Common myeloid progenitor, CD34-positive (primary cell): ENCODE measurements at regions of chr12 and their contacts with region 1.

Region 1: DNA sequence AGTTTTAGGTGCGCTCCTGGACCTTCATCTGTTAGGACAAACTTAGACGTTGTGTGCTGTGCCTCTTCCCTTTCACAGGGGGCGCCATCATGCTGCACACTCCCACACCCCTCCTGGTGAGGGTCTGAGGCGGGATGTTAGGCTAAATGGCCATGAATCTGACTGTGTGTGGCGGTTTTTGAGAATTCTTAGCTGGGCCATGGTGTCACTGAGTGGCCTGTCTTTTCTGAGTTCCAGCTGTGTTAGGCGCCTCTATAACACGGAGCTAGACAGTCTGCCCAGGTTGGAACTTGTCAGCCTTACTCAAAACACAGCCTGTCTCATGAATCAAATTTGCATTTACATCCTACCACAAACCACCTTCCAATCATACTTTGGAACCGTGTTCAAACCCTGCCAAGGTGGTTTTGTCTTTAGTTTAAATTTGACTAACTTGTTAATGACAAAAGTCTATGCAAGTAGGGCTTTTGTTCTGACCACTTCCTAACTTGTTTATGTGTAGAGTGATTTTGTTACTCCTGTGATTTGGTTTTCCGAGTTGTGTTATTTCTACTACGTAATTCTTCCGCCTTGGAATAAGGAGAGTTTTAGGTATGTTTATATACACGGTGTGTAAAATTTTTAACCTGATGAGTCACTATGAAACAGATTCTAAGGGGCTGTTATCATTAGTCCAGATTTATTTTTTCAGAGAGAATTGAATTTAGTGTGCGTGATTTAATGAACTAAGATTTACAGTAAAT is 19.6 kb downstream of the ACVR1B start:
- DNase-seq: peak in 2 of 3 donors; percentile 41 to 47
- H3K4me3 ChIP-seq: peak overlapping the region in 2 of 7 experiments; percentile 4 to 26
- H3K27ac ChIP-seq: no peak overlapping the region
- H3K4me1 ChIP-seq: peaks cover 49 to 62% (median 54%) of the 10 kb centered on the region in 4 experiments
- H3K27me3 ChIP-seq: no peaks in the 10 kb centered on the region

Region 2: DNA sequence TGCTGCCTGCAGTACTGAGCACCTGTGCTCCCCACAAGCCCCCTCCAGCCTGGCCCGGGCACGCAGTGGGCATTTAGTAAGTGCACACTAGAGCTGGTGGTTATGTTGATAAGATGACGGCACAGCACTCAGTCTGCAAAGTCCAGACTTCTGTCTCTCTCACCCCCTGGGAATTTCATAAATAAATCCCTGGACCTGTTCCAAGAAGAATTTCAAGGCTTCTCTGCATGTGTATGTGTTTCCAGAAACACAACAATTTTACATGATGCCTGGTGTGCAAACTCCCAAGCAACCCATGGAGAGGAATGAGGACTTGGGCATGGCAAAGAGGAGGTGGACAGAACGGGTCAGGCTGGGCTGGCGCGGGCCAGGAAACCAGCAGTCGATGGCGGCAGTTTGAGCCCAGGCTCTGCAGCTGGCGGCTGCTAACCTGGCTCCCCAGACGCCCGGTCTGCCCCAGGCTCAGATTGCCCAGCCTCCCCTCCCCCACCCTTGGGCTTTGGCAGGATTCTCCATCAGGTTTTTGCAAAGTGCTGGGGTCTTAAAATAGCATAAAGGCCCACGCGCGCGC is 30.0 kb before region 1 on chr12:
- CTCF ChIA-PET with region 1: no interaction called
- POLR2A ChIA-PET with region 1: no interaction called
- DNase-seq: no peak
- H3K4me3 ChIP-seq: no peak overlapping the region
- H3K27ac ChIP-seq: no peak overlapping the region
- H3K4me1 ChIP-seq: peaks cover 0 to 6% (median 2%) of the 10 kb centered on the region in 4 experiments
- H3K27me3 ChIP-seq: no peaks in the 10 kb centered on the region

Region 3: GRCh38 chr12:51959211-51959610 is 11.9 kb before region 1 on chr12:
- CTCF ChIA-PET with region 1: interaction called, 25 read pairs
- POLR2A ChIA-PET with region 1: interaction called, 3 read pairs
- DNase-seq: no peak
- H3K4me3 ChIP-seq: no peak overlapping the region
- H3K27ac ChIP-seq: no peak overlapping the region
- H3K4me1 ChIP-seq: peaks cover 23 to 45% (median 28%) of the 10 kb centered on the region in 4 experiments
- H3K27me3 ChIP-seq: no peaks in the 10 kb centered on the region